ENCODE measurements at regions of chr17 and their contacts with region 1.

Region 1: DNA sequence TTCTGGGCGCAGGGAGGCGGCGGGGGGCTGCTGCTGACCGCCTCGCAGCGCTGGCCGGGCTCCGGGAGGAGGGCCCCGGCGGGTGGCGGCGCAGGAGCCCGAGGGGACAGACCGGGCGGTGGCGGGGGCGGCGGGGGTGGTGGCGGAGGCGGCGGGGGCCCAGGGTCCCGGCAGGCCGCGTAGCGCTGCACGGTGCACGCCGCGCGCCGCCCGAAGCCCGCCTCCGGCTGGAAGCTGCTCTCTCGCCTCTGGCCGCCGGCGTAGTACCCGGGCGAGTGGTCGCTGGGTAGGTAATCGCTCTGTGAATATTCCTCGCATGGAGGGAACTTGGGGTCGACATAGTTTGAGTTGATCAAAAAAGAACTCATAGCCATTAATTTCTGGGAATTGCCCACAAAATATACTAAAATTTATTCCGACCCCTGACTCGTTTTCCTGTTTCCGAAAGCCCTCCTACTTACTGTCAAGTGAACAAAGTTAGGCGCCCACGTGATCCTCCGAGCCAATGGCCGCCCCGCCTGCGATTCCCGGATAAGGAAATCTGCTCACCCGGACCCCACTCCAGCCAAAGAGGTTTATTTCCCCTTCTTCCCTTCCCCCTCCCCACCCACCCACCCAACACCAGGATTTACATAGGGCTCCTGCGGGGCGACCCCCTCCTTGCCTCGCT is at the start of gene HOXB4:
- DNase-seq: peak; percentile 76 to 84
- ATAC-seq: no peak
- total RNA-seq, gene HOXB4: 3.0 to 3.9 TPM

Region 2: DNA sequence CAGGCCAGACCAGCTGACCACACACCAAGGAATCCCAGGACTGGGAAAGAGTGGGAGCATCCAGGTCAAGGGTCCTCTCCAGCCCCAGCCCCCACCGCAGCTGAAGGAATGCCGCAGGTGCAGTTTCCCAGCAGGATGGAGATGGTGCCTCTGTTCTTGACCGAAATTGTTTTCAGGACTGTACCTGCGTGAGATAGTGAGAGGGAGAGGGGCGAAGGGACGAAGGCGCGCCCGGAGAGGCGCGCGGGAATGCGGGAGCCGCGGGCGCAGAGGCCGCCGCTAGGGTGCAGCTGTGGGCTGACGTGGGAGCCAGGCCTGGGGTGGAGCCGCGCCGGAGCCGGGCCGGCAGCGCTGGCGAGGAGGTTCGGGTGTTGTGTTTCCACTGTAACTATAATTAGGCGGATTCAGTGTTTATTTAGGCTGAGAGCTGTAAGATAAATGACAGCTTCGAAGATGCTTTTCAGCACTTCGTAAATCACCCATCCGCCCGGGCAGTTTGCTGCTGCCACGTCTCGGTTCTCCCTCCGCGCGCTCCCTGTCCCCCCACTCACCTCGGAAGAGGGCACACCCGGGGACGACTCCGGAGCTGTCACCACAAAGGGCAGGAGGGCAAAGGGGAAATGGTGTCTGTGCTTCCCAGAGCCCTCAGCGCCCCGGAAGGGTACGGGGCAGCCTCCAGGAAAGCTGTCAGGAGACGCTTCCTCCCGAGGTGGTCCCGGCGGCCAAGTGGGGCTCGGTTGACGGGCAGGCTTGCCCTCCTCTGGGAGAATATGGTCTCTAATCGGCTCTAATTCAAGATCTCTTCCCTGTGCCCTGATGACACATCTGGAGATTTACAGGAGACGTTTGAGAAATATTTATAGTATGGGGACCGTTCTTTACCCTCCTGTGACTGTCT is 85.4 kb before region 1 on chr17:
- intact Hi-C with region 1: loop called in 1 of 2 experiments (anchors 5 kb)
- DNase-seq: peak; percentile 62 to 82
- ATAC-seq: peak; percentile 98